A673 (cell line): ENCODE measurements at regions of chr19 and their contacts with region 1.

Region 1: DNA sequence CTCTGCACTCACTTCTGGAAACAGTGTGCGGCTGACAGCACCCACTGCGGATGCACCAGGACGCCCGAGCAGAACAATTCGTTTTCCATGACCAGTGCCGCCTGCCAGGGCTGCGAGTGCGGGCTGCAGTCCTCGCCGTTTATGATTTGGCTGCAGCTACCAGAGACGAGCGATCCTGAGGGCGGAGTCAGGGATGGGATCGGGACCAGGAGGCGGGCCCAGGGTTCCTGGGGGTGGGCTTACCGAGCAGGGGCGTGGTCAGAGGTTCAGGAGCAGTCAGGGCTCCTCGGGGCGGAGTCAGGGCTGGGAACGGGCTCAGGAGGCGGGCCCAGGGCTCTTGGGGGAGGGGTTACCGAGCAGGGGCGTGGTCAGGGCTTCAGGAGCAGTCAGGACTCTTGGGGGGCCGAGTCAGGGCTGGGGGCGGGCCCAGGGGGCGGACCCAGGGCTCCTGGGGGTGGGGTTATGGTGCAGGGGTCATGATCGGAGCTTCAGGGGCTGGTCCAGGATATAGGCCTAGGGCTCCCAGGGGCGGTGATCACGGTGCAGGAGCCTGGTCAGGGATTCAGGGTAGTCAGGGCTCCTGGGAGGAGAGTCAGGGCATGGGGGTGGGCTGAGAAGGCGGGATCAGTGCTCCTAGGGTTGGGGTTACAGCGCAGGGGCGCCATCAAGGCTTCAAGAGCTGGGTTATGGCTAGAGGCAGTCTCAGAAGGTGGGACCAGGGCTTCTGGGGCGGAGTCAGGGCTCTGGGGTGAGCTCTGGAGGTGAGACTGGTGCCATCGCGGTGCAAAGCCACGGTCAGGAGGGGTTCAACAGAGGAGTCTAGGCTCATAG is 1.7 kb downstream of the KLK4 start:
- DNase-seq: peak; percentile 90
- H3K4me3 ChIP-seq: peak overlapping the region; percentile 12
- H3K27ac ChIP-seq: no peak overlapping the region
- H3K4me1 ChIP-seq: no peaks in the 10 kb centered on the region
- H3K27me3 ChIP-seq: peaks cover 43% of the 10 kb centered on the region
- CTCF ChIP-seq: no peak

Region 2: DNA sequence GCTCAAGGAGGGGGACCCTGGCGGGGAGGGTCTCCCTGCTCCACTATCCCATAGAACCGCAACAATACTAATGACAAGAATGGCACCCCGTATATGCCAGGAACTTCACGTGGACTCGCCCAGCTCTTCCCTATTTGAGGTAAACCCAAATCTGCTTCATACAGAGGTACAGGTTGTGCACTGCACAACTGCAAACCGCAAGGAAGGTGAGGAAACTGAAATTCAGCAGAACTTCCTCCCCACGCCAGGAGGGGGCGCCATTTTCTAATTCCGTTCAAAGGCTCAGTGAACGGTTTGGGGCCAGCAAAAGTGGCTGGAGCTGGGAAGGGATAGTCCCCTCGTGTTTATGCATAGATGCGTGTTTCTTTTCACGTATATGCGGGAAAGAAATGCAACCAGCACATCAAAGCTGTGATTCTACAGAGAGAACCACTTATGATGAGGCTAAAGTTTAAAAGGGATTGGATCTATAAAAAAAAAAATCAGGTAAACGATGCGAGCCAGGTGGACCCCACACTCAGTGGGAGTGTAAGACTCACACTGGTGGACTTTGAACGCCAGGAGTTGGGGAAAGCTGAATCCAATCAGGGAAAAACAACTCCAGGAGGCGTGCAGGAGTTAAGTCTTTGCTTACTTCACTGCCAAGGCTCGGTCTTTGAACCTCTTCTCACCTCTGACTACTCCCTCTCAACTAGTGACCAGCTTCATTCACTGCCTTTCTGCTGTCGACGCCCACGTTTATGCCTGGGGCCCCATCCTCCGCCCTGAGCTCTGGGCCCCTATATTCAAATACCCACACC is 240.0 kb before region 1 on chr19:
- CTCF ChIA-PET with region 1: interaction called, 12 read pairs
- POLR2A ChIA-PET with region 1: no interaction called
- intact Hi-C with region 1: no loop called
- DNase-seq: peak; percentile 64
- H3K4me3 ChIP-seq: no peak overlapping the region
- H3K27ac ChIP-seq: no peak overlapping the region
- H3K4me1 ChIP-seq: peaks cover 7% of the 10 kb centered on the region
- H3K27me3 ChIP-seq: peaks cover 30% of the 10 kb centered on the region
- CTCF ChIP-seq: peak; percentile 92

Region 3: DNA sequence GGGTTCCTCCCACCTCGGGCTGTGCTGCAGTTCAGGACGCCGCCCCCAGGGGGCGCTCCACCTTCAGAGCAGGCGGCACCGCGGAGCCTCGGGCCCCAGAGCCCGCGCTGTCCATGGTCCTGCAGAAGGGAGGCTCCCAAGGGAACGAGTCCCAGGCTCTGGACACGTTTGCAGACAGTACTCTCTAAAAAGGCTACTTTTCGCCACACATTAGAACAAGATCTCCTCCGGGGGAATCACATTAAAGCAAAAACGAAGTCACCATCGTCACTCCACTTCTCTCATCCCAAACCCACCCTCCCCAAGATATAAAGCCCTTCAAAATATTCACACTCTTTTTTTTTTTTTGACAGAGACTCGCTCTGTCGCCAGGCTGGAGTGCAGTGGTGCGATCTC is 512.6 kb after region 1 on chr19:
- CTCF ChIA-PET with region 1: no interaction called
- POLR2A ChIA-PET with region 1: interaction called, 26 read pairs
- intact Hi-C with region 1: no loop called
- DNase-seq: peak; percentile 85
- H3K4me3 ChIP-seq: no peak overlapping the region
- H3K27ac ChIP-seq: no peak overlapping the region
- H3K4me1 ChIP-seq: no peaks in the 10 kb centered on the region
- H3K27me3 ChIP-seq: peaks cover 17% of the 10 kb centered on the region
- CTCF ChIP-seq: peak; percentile 97